HEK293 (cell line): ENCODE measurements at regions of chr5 and their contacts with region 1.

Region 1: DNA sequence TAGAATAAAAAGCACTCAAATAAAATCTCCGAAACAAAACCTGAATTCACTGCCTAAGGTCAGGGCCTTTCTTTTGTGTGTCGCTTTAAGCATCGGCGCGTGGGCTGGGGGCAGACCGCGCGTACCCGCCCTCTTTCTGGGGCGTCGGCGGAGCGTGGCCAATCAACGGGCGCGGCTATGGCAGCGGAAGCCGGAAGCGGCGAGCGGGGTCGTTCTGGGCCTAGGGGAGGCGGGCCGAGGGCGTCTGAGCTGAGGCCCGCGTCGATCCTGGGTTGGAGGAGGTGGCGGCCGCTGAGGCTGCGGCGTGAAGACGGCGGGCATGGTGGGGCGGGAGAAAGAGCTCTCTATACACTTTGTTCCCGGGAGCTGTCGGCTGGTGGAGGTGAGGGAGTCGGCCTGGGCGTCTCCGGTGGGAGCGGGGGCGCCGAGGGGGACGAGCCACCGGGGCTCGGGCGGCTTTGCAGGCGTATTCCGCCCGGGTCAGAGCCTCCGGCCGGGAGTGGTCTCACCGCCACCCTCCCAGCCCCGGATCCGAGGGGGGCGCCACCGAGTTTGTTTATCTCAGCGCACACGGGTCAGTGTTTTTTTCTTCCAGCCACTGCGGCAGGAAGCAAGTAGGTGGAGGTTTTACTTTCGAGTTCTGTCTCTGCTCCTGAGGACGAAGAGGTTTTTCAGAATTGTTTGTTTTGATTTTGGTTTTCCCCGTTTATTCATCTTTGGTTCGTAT is at the start of gene MAT2B:
- H3K4me3 ChIP-seq: peak within 1 kb of the TSS; percentile 80
- H3K27ac ChIP-seq: peak within 1 kb of the TSS; percentile 92
- H3K4me1 ChIP-seq: peaks cover 16% of the 10 kb centered on the region
- CTCF ChIP-seq: peak; percentile 93

Region 2: GRCh38 chr5:163459922-163460766 is 45.4 kb before region 1 on chr5 and contains the starts of genes HMMR and NUDCD2:
- CTCF ChIA-PET with region 1: interaction called, 4 read pairs
- POLR2A ChIA-PET with region 1: interaction called, 49 read pairs
- H3K4me3 ChIP-seq: peak within 1 kb of the TSS; percentile 84
- H3K27ac ChIP-seq: peak within 1 kb of the TSS; percentile 99
- H3K4me1 ChIP-seq: peaks cover 10% of the 10 kb centered on the region
- CTCF ChIP-seq: peak; percentile 89

Region 3: GRCh38 chr5:163525096-163525495 is 19.6 kb after region 1 on chr5:
- CTCF ChIA-PET with region 1: no interaction called
- POLR2A ChIA-PET with region 1: no interaction called
- H3K4me3 ChIP-seq: no peak overlapping the region
- H3K27ac ChIP-seq: no peak overlapping the region
- H3K4me1 ChIP-seq: no peaks in the 10 kb centered on the region
- CTCF ChIP-seq: no peak

Region 4: GRCh38 chr5:164002628-164003027 is 497.1 kb after region 1 on chr5:
- CTCF ChIA-PET with region 1: no interaction called
- POLR2A ChIA-PET with region 1: no interaction called
- H3K4me3 ChIP-seq: no peak overlapping the region
- H3K27ac ChIP-seq: no peak overlapping the region
- H3K4me1 ChIP-seq: no peaks in the 10 kb centered on the region
- CTCF ChIP-seq: no peak